ENCODE measurements at regions of chr11 and their contacts with region 1.

Region 1: GRCh38 chr11:66607126-66607834 is 9.2 kb upstream of the RBM14 start:
- DNase-seq: no peak
- H3K4me3 ChIP-seq: no peak overlapping the region
- H3K27ac ChIP-seq: no peak overlapping the region
- H3K4me1 ChIP-seq: peaks cover 2% of the 10 kb centered on the region
- H3K27me3 ChIP-seq: no peaks in the 10 kb centered on the region
- CTCF ChIP-seq: no peak

Region 2: DNA sequence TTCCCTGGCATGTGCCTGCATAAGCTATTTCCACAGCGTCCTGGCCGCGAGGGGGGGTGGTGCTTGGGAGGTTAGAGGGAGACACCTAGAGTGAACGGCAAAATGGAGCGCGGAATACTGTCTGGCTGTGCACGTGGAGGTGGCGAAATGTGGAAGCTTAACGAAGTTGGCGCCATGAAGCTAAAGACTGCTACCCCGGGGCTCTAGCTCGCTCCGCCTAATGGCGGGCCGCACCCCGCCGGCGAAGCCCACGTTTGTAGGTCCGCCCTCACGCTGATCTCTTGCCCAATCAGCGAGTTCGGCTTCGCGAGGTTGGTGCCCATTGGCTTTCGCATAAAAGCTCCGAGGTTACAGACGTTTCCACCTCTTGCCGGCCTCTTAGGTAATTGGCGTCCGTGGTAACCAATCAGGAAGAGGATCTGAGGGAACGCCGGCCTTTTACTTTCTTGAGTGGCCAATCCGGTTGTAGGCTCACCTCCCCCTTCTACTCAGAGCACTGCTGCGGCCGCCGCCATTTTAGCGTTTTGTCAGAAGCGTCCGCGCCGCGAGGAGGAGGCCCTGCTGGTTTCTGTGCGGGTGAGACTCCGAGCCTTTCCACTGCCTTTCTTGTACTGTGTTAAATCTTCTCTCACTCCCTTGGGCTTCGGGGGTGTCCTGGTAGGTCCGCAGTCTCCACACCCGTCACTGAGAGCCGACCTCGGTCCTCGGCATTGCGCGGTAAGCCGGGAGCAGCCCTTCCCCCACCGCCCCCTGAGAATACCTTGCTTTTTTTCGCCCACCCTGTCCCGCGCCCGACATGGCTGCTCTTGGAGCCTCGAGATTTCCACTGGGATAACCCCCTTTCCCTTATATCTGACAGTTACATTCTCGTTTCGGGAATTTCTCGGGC is 31.1 kb after region 1 on chr11 and contains the start of gene RBM4:
- CTCF ChIA-PET with region 1: no interaction called
- POLR2A ChIA-PET with region 1: interaction called, 16 read pairs
- intact Hi-C with region 1: no loop called
- DNase-seq: peak; percentile 99 to 100
- H3K4me3 ChIP-seq: peak within 1 kb of the TSS; percentile 92
- H3K27ac ChIP-seq: peak within 1 kb of the TSS; percentile 68
- H3K4me1 ChIP-seq: peaks cover 38% of the 10 kb centered on the region
- H3K27me3 ChIP-seq: no peaks in the 10 kb centered on the region
- CTCF ChIP-seq: no peak
- total RNA-seq, gene RBM4: 131 and 140 TPM in 2 replicates

Measured in PC-9 (cell line).